ENCODE measurements at regions of chr12 and their contacts with region 1.

Region 1: GRCh38 chr12:102484428-102484958 is 4.1 kb upstream of the IGF1 start:
- DNase-seq: peak; percentile 21 to 71
- ATAC-seq: peak; percentile 34 to 68 (median 63)
- H3K4me3 ChIP-seq: no peak overlapping the region
- H3K4me3 Mint-ChIP-seq: peak overlapping the region; percentile 67
- H3K27ac ChIP-seq: no peak overlapping the region
- H3K27ac Mint-ChIP-seq: peak overlapping the region in 1 of 2 donors; percentile 56
- H3K4me1 ChIP-seq: peaks cover 2% of the 10 kb centered on the region
- H3K4me1 Mint-ChIP-seq: peaks cover 11 to 13% of the 10 kb centered on the region in 2 donors
- H3K27me3 ChIP-seq: peaks cover 5% of the 10 kb centered on the region
- H3K27me3 Mint-ChIP-seq: peaks cover 10 to 12% of the 10 kb centered on the region in 2 donors
- CTCF ChIP-seq: peak; percentile 96

Region 2: DNA sequence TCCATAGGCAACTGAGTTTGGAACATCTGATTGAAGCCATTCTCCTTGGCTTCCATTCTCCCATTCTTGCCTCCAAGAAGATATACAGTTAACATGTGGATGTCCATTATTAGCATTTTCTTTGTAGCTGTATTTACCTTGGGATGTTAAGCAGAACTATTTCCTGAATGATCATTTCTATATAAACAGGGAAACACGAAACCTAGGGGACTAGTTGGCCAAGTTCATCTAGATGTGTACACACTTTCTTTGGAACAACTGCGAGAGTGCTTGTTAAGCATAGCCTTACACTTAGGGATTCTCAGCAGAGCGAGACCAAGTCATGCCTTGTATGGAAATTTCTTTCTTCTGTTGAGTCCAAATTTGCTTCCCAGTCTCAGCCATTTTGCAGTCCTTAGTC is 565.0 kb before region 1 on chr12:
- intact Hi-C with region 1: loop called (anchors 1 kb)
- DNase-seq: no peak
- ATAC-seq: no peak
- H3K4me3 ChIP-seq: no peak overlapping the region
- H3K4me3 Mint-ChIP-seq: no peak overlapping the region
- H3K27ac ChIP-seq: no peak overlapping the region
- H3K27ac Mint-ChIP-seq: no peak overlapping the region
- H3K4me1 ChIP-seq: peaks cover 7% of the 10 kb centered on the region
- H3K4me1 Mint-ChIP-seq: peaks cover 4 to 10% of the 10 kb centered on the region in 2 donors
- H3K27me3 ChIP-seq: no peaks in the 10 kb centered on the region
- H3K27me3 Mint-ChIP-seq: no peaks in the 10 kb centered on the region
- CTCF ChIP-seq: no peak

Region 3: GRCh38 chr12:101939856-101940265 is 544.6 kb before region 1 on chr12:
- intact Hi-C with region 1: loop called (anchors 10 kb)
- DNase-seq: peak; percentile 21 to 76
- ATAC-seq: peak; percentile 61 to 76 (median 65)
- H3K4me3 ChIP-seq: no peak overlapping the region
- H3K4me3 Mint-ChIP-seq: no peak overlapping the region
- H3K27ac ChIP-seq: no peak overlapping the region
- H3K27ac Mint-ChIP-seq: no peak overlapping the region
- H3K4me1 ChIP-seq: no peaks in the 10 kb centered on the region
- H3K4me1 Mint-ChIP-seq: no peaks in the 10 kb centered on the region
- H3K27me3 ChIP-seq: no peaks in the 10 kb centered on the region
- H3K27me3 Mint-ChIP-seq: peaks cover 16 to 37% of the 10 kb centered on the region in 2 donors
- CTCF ChIP-seq: peak; percentile 62

Region 4: GRCh38 chr12:102990419-102990818 is 505.9 kb after region 1 on chr12:
- intact Hi-C with region 1: no loop called
- DNase-seq: no peak
- ATAC-seq: no peak
- H3K4me3 ChIP-seq: no peak overlapping the region
- H3K4me3 Mint-ChIP-seq: no peak overlapping the region
- H3K27ac ChIP-seq: no peak overlapping the region
- H3K27ac Mint-ChIP-seq: no peak overlapping the region
- H3K4me1 ChIP-seq: no peaks in the 10 kb centered on the region
- H3K4me1 Mint-ChIP-seq: no peaks in the 10 kb centered on the region
- H3K27me3 ChIP-seq: no peaks in the 10 kb centered on the region
- H3K27me3 Mint-ChIP-seq: no peaks in the 10 kb centered on the region
- CTCF ChIP-seq: no peak